KBM-7 (cell line): ENCODE measurements at regions of chr7 and their contacts with region 1.

Region 1: GRCh38 chr7:4809091-4809591 is 33.7 kb downstream of the AP5Z1 start:
- DNase-seq: peak; percentile 40

Region 2: GRCh38 chr7:5077740-5078139 is 268.6 kb after region 1 on chr7:
- in situ Hi-C with region 1: loop called (anchors 25 kb)
- DNase-seq: peak; percentile 43